ENCODE measurements at regions of chr17 and their contacts with region 1.

Region 1: DNA sequence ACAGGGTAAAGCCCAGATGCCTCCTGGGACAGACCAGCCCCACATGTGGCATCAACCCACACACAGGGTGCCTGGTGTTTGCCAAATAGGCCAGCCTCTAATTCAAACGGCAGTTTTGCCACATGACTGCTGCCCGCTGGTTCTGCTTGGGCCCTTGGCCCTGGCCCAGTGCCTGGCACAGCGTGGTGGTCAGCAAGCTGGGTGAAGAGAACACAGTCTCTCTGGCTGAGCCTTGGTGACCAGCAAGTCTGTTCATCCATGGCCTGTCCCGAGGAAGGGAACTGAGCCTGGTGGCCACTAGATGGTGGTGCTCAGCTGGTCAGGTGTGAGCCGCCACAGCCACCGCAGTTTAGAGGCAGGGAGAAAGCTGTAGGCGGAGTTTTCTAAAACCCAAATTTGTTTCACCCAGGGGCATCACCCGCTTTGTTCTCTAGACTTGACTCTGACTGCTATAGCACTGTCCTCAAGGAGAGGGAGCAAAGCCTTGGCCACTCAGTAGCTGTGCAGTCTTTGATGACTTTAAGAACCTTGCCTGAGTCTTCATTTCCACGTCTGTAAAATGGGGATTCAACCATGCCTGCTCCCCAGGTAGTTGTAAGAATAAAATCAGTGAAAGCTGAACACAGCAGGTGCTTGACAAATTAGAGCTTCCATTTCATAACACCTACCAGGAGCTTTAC is 4.7 kb upstream of the GFAP start:
- DNase-seq: peak; percentile 79
- H3K4me3 ChIP-seq: no peak overlapping the region
- H3K27ac ChIP-seq: no peak overlapping the region
- H3K4me1 ChIP-seq: peaks cover 0 to 8% (median 2%) of the 10 kb centered on the region in 4 donors
- H3K27me3 ChIP-seq: peaks cover 13% of the 10 kb centered on the region
- CTCF ChIP-seq: peak; percentile 73 to 89 (median 80)
- EP300 ChIP-seq: no peak
- POLR2A ChIP-seq: no peak

Region 2: GRCh38 chr17:45006927-45007461 is 87.0 kb after region 1 on chr17:
- in situ Hi-C with region 1: loop called in 2 of 4 experiments (anchors 5 to 10 kb)
- intact Hi-C with region 1: no loop called
- DNase-seq: no peak
- H3K4me3 ChIP-seq: no peak overlapping the region
- H3K27ac ChIP-seq: no peak overlapping the region
- H3K4me1 ChIP-seq: no peaks in the 10 kb centered on the region
- H3K27me3 ChIP-seq: no peaks in the 10 kb centered on the region
- CTCF ChIP-seq: no peak
- EP300 ChIP-seq: no peak
- POLR2A ChIP-seq: no peak

Region 3: GRCh38 chr17:45021607-45022287 is 101.7 kb after region 1 on chr17:
- in situ Hi-C with region 1: loop called in 2 of 4 experiments (anchors 5 to 10 kb)
- intact Hi-C with region 1: loop called (anchors 2 kb)
- DNase-seq: peak; percentile 72
- H3K4me3 ChIP-seq: peak overlapping the region in 3 of 4 donors; percentile 33 to 51 (median 35)
- H3K27ac ChIP-seq: peak overlapping the region; percentile 76 to 85 (median 83)
- H3K4me1 ChIP-seq: peaks cover 30 to 44% (median 30%) of the 10 kb centered on the region in 4 donors
- H3K27me3 ChIP-seq: peaks cover 8% of the 10 kb centered on the region
- CTCF ChIP-seq: peak in 4 of 5 experiments; percentile 65 to 90 (median 87)
- EP300 ChIP-seq: no peak
- POLR2A ChIP-seq: peak; percentile 33

Region 4: GRCh38 chr17:45098869-45099616 is 179.0 kb after region 1 on chr17:
- in situ Hi-C with region 1: loop called in 3 of 4 experiments (anchors 10 kb)
- intact Hi-C with region 1: loop called (anchors 10 kb)
- DNase-seq: peak; percentile 93
- H3K4me3 ChIP-seq: no peak overlapping the region
- H3K27ac ChIP-seq: peak overlapping the region; percentile 10 to 81 (median 44)
- H3K4me1 ChIP-seq: peaks cover 7 to 11% (median 9%) of the 10 kb centered on the region in 4 donors
- H3K27me3 ChIP-seq: no peaks in the 10 kb centered on the region
- CTCF ChIP-seq: peak; percentile 85 to 93 (median 90)
- EP300 ChIP-seq: no peak
- POLR2A ChIP-seq: no peak

Region 5: GRCh38 chr17:45108595-45109521 is 188.8 kb after region 1 on chr17:
- in situ Hi-C with region 1: loop called in 2 of 4 experiments (anchors 10 kb)
- intact Hi-C with region 1: loop called (anchors 10 kb)
- DNase-seq: peak; percentile 39
- H3K4me3 ChIP-seq: no peak overlapping the region
- H3K27ac ChIP-seq: peak overlapping the region in 2 of 4 donors; percentile 69 to 79
- H3K4me1 ChIP-seq: peaks cover 0 to 18% (median 2%) of the 10 kb centered on the region in 4 donors
- H3K27me3 ChIP-seq: no peaks in the 10 kb centered on the region
- CTCF ChIP-seq: peak in 3 of 5 experiments; percentile 15 to 35 (median 17)
- EP300 ChIP-seq: no peak
- POLR2A ChIP-seq: no peak